ENCODE measurements at regions of chr11 and their contacts with region 1.

Region 1: GRCh38 chr11:118198370-118198769 is 21.9 kb upstream of the SCN2B start:
- DNase-seq: peak; percentile 70
- ATAC-seq: peak; percentile 90
- H3K4me3 Mint-ChIP-seq: peak overlapping the region; percentile 21
- H3K27ac Mint-ChIP-seq: no peak overlapping the region
- H3K4me1 Mint-ChIP-seq: peaks cover 2% of the 10 kb centered on the region
- H3K27me3 Mint-ChIP-seq: peaks cover 2% of the 10 kb centered on the region
- CTCF ChIP-seq: peak; percentile 65

Region 2: GRCh38 chr11:118214210-118214914 is 16.0 kb after region 1 on chr11:
- CTCF ChIA-PET with region 1: interaction called, 38 read pairs
- POLR2A ChIA-PET with region 1: interaction called, 6 read pairs
- intact Hi-C with region 1: no loop called
- DNase-seq: peak; percentile 25
- ATAC-seq: peak; percentile 66
- H3K4me3 Mint-ChIP-seq: peak overlapping the region; percentile 60
- H3K27ac Mint-ChIP-seq: peak overlapping the region; percentile 67
- H3K4me1 Mint-ChIP-seq: peaks cover 57% of the 10 kb centered on the region
- H3K27me3 Mint-ChIP-seq: peaks cover 28% of the 10 kb centered on the region
- CTCF ChIP-seq: no peak

Region 3: DNA sequence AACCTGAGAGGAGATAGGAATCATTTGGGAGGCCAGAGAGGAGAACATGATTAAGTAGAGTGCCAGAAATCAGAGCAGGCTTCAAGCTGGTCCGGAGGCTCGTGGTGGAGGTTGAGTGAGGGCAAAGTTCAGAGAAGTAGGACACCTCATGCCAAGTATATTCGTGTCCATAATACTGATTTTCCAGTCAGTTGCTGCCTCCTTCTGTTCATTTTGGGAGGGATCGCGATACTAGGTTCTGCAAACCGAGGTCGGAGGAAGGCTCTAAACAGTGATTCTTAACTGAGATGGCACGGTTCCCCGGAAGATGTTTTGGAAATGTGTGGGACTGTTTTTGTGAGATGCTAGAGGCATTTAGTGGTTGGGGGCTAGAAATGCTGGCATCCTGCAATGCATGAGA is 92.6 kb after region 1 on chr11:
- CTCF ChIA-PET with region 1: interaction called, 54 read pairs
- POLR2A ChIA-PET with region 1: interaction called, 5 read pairs
- intact Hi-C with region 1: loop called (anchors 1 kb)
- DNase-seq: no peak
- ATAC-seq: peak; percentile 37
- H3K4me3 Mint-ChIP-seq: no peak overlapping the region
- H3K27ac Mint-ChIP-seq: no peak overlapping the region
- H3K4me1 Mint-ChIP-seq: no peaks in the 10 kb centered on the region
- H3K27me3 Mint-ChIP-seq: peaks cover 15% of the 10 kb centered on the region
- CTCF ChIP-seq: no peak

Region 4: DNA sequence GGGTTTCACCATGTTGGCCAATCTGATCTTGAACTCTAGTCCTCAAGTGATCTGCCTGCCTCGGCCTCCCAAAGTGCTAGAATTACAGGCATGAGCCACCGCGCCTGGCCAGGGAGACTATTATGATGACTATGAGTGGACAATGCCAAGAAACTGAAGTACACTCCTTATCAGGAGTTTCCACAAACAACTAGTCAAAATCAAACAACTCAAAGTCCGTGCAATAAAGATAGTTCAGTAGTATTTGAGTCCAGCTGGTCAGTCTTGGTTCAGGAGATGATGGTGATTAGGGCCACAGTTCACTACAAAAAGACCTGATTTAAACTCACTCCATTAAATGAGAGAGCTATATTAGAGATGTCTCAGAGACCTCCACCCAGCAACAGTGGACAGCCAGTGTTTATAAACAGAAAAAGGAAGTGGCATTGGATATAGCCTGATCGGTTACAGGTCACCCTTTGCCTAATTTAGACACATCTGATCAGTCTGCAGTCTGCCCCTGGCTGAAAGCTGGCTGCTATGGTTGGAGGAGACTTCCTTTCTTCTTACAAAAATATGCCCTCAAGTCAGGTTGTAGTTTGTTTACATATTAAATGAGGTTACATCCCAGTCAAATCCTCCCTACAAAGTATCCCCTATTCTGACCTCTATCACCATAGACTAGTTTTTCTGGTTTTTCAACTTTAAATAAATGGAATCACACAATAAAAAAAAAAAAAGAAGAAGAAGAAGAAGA is 123.2 kb after region 1 on chr11:
- CTCF ChIA-PET with region 1: interaction called, 3 read pairs
- POLR2A ChIA-PET with region 1: interaction called, 12 read pairs
- intact Hi-C with region 1: no loop called
- DNase-seq: no peak
- ATAC-seq: peak; percentile 49
- H3K4me3 Mint-ChIP-seq: peak overlapping the region; percentile 39
- H3K27ac Mint-ChIP-seq: peak overlapping the region; percentile 83
- H3K4me1 Mint-ChIP-seq: peaks cover 67% of the 10 kb centered on the region
- H3K27me3 Mint-ChIP-seq: peaks cover 4% of the 10 kb centered on the region
- CTCF ChIP-seq: no peak

Region 5: DNA sequence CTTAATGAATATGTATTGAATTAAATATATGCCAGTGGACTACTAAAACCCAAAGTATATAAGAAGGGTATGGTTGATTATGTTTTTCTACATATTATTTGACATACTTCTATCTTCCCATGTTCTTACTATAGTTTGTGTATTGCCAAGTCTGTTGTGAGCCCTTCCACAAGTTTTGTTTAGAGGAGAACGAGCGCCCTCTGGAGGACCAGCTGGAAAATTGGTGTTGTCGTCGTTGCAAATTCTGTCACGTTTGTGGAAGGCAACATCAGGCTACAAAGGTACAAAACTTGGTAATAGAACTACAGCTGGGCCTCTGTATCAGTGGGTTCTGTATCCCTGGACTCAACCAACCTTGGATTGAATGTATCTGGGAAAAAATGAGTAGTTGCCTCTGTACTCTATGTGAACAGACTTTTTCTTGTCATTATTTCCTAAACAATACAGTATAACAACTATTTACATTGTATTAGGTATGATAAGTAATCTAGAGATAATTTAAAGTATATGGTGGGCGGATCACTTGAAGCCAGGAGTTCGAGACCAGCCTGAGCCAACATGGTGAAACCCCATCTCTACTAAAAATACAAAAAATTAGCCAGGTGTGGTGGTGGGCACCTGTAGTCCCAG is 290.2 kb after region 1 on chr11:
- CTCF ChIA-PET with region 1: interaction called, 15 read pairs
- POLR2A ChIA-PET with region 1: no interaction called
- intact Hi-C with region 1: loop called (anchors 1 kb)
- DNase-seq: peak; percentile 46
- ATAC-seq: peak; percentile 72
- H3K4me3 Mint-ChIP-seq: no peak overlapping the region
- H3K27ac Mint-ChIP-seq: no peak overlapping the region
- H3K4me1 Mint-ChIP-seq: no peaks in the 10 kb centered on the region
- H3K27me3 Mint-ChIP-seq: no peaks in the 10 kb centered on the region
- CTCF ChIP-seq: peak; percentile 41